ENCODE measurements at regions of chr20 and their contacts with region 1.

Region 1: GRCh38 chr20:2172305-2173175 is 70.9 kb downstream of the STK35 start:
- DNase-seq: peak; percentile 79
- H3K4me3 Mint-ChIP-seq: no peak overlapping the region
- H3K27ac Mint-ChIP-seq: no peak overlapping the region
- H3K4me1 Mint-ChIP-seq: peaks cover 3% of the 10 kb centered on the region
- H3K27me3 Mint-ChIP-seq: peaks cover 25% of the 10 kb centered on the region

Region 2: DNA sequence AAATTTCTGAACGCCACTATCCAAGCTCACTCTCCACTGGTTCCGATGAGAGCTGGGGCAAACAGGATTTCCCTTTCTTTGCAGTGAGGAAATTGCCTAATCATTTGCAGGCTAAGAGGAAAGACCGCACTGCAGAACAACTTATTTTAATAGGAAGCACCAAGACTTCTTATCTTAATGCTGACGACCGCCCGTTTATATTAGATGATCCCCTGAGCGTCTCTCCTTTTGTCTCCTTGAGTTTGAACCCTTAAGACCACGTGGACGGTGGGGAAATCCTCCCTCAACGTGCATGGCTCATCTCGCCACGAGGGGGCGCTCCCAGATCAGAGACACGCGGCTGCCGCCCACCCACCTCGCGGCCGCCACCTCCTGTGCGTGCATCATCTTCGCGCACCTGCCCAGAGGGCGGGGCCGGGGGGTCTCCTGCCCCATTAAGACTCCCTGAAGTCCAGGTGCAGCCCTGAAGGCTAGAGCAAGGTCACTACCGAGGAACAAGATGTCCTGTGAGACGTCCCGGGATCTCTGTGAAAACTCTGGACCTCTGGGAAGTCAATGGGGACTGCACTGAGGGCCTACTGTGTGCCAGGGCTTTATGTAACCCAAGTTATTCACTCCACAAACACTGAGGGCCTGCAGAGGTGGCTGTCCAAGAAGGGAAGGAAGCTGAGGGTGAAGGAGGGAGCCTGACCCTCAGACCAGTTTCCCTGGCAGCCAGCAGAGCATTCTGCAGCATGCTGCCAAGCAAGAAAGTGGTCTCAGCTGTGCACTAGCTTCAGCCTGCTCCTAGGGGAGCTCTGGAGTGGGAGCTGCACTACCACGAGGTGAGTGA is 206.8 kb before region 1 on chr20:
- CTCF ChIA-PET with region 1: interaction called, 31 read pairs
- DNase-seq: peak; percentile 77
- H3K4me3 Mint-ChIP-seq: peak overlapping the region; percentile 3
- H3K27ac Mint-ChIP-seq: no peak overlapping the region
- H3K4me1 Mint-ChIP-seq: peaks cover 10% of the 10 kb centered on the region
- H3K27me3 Mint-ChIP-seq: peaks cover 39% of the 10 kb centered on the region

Region 3: GRCh38 chr20:2005831-2006426 is 166.6 kb before region 1 on chr20:
- CTCF ChIA-PET with region 1: interaction called, 72 read pairs
- DNase-seq: peak; percentile 84
- H3K4me3 Mint-ChIP-seq: no peak overlapping the region
- H3K27ac Mint-ChIP-seq: no peak overlapping the region
- H3K4me1 Mint-ChIP-seq: no peaks in the 10 kb centered on the region
- H3K27me3 Mint-ChIP-seq: peaks cover 21% of the 10 kb centered on the region

Region 4: GRCh38 chr20:2093159-2093781 is 79.3 kb before region 1 on chr20:
- CTCF ChIA-PET with region 1: interaction called, 12 read pairs
- DNase-seq: peak; percentile 56
- H3K4me3 Mint-ChIP-seq: no peak overlapping the region
- H3K27ac Mint-ChIP-seq: no peak overlapping the region
- H3K4me1 Mint-ChIP-seq: no peaks in the 10 kb centered on the region
- H3K27me3 Mint-ChIP-seq: peaks cover 35% of the 10 kb centered on the region

Region 5: GRCh38 chr20:2109425-2110210 is 62.9 kb before region 1 on chr20:
- CTCF ChIA-PET with region 1: no interaction called
- DNase-seq: no peak
- H3K4me3 Mint-ChIP-seq: no peak overlapping the region
- H3K27ac Mint-ChIP-seq: peak overlapping the region; percentile 22
- H3K4me1 Mint-ChIP-seq: peaks cover 63% of the 10 kb centered on the region
- H3K27me3 Mint-ChIP-seq: no peaks in the 10 kb centered on the region

Region 6: DNA sequence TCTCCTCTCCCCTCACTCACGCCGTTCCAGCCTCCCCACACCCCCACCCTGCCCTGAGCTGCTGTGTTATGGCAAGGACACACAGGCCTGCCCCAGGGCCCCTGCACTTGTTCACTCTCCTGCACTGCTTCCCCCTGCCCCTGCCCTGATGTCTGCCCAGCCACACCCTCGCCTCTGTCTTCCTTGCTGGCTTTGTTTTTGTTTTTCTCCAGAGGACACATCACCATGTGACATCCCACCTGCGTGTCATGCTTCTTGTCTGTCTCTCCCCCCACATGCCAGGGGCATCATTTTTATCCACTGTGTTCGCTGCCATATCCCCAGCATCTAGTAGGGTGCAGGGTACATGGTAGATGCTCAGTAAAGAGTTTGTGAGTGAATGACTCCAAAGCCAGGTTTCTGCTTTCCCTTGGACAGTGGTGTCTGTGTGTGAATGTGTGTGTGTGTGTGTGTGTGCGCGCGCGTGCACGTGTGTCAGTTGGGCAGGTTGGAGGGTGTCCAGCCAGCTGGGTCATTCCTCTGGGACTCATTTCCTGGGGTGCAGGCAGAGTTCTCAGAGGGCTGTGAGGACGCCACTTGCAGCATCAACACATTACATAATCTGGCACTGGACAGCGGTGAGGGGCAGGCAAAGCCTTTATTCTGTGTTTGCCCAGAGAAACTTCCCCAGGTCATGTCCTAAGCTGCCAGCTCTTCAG is 10.3 kb before region 1 on chr20:
- CTCF ChIA-PET with region 1: interaction called, 12 read pairs
- DNase-seq: no peak
- H3K4me3 Mint-ChIP-seq: no peak overlapping the region
- H3K27ac Mint-ChIP-seq: no peak overlapping the region
- H3K4me1 Mint-ChIP-seq: no peaks in the 10 kb centered on the region
- H3K27me3 Mint-ChIP-seq: no peaks in the 10 kb centered on the region